Sigmoid colon (tissue), 7 donors: ENCODE measurements at regions of chr17 and their contacts with region 1.

Region 1: DNA sequence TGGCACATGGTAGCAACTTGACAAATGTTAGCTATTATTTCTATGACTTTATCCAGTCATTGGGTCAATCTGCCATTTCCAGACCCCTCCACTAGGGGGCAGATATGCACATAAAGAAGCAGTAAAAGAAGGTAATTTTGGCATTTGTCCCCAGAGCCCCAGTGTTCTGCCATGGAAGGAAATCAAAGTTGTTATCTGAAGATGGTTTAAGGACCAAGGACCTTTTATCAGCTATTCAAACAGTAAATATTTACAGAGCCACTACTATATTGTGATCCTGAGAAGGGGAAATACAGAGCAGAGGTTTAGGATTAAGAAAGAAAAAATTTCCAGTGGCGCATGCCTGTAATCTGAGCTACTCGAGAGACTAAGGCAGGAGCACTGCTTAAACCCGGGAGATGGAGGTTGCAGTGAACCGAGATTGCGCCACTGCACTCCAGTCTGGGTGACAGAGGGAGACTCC is 20.0 kb downstream of the TRAF4 start:
- DNase-seq: peak; percentile 88
- H3K4me3 ChIP-seq: no peak overlapping the region
- H3K27ac ChIP-seq: peak overlapping the region in 1 of 4 donors; percentile 27
- H3K4me1 ChIP-seq: peaks cover 0 to 18% (median 6%) of the 10 kb centered on the region in 4 donors
- H3K27me3 ChIP-seq: no peaks in the 10 kb centered on the region
- CTCF ChIP-seq: peak; percentile 65 to 86 (median 84)
- EP300 ChIP-seq: no peak
- POLR2A ChIP-seq: no peak

Region 2: DNA sequence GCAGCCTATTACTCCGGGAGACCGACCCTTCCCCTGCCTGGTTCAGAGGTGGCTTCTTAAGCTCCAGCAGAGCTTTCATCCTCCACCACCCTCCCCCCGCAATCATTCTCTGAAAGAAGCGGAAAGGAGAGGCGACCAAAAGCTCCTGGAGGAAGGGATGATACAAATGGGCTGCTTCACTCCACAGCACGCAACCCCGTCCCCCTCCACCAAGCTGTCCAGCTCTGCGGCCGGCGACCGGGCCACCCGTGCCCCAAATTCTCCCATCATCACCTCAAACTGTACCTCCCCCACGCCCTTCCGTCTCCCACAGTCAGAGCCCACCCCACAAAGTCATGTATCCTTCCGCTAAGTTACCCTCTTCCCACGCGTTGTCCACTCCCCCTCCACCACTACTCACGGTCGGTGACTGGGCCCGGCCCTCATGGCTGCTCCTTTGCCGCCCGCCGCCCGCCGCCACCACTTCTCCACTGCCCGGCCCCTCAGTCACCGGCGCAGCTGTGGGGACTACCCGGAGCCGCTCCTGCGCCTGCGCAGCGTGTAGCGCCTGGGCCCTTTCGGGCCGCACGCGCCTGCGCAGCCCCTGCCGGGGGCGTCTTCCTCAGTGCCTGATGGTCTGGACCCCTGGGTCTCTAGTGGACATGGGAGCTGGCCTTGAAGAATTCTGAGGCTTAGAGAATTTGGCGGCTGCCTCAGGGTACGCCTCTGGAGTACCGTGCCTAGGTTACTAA is 78.6 kb after region 1 on chr17 and contains the start of gene FAM222B:
- intact Hi-C with region 1: loop called (anchors 2 kb)
- DNase-seq: peak; percentile 88
- H3K4me3 ChIP-seq: peak within 1 kb of the TSS; percentile 74 to 90 (median 84)
- H3K27ac ChIP-seq: peak within 1 kb of the TSS; percentile 80 to 90 (median 86)
- H3K4me1 ChIP-seq: peaks cover 0 to 26% (median 8%) of the 10 kb centered on the region in 4 donors
- H3K27me3 ChIP-seq: no peaks in the 10 kb centered on the region
- CTCF ChIP-seq: peak in 1 of 4 experiments; percentile 23
- EP300 ChIP-seq: no peak
- POLR2A ChIP-seq: peak; percentile 67 to 70
- total RNA-seq, gene FAM222B: 5.0 to 11.9 (median 7.2) TPM

Region 3: DNA sequence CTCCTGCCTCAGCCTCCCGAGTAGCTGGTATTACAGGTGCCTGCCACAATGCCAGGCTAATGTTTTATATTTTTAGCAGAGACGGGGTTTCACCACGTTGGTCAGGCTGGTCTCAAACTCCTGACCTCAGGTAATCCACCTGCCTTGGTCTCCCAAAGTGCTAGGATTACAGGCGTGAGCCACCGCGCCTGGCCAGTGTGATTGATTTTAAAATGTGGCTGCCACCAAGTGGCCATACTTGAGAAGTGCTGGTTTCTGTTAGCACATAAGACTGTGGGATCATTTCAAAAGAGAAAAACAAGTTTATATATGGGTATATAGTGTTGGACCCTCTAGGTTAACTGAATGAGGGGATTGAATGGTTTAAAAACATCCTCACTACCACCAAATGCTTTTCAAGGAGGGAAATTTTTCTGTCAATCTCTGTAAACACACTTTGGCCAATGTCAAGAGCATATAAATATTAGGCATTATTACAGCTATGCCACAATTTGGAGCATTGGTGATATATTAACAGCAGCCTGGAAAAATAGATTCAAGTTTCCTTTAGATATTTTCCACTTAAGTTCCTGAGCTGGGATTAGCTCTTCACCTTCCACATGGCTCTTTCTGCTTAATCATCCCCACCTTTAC is 152.6 kb after region 1 on chr17:
- intact Hi-C with region 1: loop called (anchors 5 kb)
- DNase-seq: no peak
- H3K4me3 ChIP-seq: no peak overlapping the region
- H3K27ac ChIP-seq: no peak overlapping the region
- H3K4me1 ChIP-seq: no peaks in the 10 kb centered on the region
- H3K27me3 ChIP-seq: no peaks in the 10 kb centered on the region
- CTCF ChIP-seq: peak; percentile 11 to 62 (median 62)
- EP300 ChIP-seq: no peak
- POLR2A ChIP-seq: no peak